AG04450 (cell line): ENCODE measurements at regions of chr11 and their contacts with region 1.

Region 1: DNA sequence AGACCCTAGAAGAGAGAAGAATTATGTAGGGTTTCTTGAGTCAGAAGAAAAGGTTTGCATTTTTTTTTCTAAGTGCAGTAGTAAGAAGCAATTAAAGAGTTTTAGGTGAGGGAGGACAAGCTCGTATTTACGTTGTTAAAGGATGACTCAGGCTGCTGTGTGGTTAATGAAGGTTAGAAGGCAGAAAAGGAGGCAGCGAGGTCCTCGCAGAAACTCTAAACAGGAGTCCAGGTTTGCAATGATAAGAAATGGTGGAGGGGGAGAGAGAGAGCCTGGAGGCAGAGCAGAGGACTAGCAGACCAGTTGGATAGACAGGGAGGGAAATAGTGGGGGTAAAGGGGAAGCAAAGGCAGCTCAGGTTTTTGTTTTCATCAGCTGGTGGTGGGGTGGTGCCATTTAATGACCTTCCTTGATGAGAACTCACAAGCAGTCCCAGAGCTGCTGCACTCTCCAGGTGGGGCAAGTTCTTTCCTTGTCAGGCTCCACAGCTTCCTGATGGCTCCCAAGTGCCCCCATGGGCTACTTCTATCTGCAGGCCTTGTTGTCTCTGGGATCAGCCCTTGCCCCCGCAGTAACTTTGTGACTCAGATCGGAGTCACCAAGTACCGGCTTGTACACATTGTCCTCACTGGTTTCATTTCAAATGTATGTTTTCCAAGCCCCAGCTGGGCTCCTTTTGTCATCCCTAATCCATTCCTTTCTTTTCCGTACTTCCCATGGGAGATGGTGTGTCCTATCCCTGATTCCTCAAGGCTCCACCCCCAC is 8.3 kb upstream of the INSC start:
- DNase-seq: no peak
- H3K4me3 ChIP-seq: no peak overlapping the region
- H3K27ac ChIP-seq: peak overlapping the region; percentile 65
- H3K27me3 ChIP-seq: no peaks in the 10 kb centered on the region
- CTCF ChIP-seq: no peak

Region 2: DNA sequence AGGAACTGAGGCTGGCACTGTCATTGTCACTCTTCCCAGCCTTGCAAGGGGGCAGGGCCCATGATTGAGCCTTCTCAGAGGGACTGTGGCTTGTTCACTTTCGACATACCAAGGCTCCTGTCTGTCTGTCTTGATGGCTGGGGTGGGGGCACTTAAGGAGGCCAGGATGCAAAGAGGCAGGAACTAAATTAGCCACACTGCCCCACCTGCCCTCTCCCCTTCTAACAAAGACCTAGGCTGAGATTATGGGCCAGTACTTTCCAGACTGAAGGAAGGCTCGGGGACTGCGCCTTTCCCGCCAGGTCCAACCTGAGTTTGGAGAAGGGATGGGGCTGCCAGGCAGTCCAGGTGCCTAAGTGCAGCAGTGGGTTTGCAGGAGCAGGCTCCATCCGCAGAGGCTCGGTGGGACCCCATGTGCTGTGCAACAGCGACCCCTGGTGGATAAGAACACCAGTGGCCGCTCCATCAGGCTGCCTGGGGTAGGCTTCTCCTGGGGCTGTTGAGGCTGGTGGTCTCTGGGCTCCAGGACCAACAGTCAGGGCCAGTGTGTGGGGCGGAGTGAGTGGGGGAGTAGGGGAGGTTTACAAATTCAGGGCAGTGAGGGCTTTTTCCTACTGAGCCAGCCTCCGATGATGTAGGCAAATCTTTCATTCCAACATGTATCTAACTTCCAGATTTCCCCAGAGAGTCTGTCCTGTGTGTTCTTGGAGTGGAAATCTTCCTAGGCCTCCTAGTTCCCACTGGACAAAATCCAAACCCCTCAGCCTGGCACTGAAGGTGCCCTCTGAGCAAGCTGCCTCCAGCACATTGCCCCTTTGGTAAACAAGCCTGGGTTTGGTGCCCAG is 102.2 kb after region 1 on chr11:
- CTCF ChIA-PET with region 1: interaction called, 142 read pairs
- POLR2A ChIA-PET with region 1: no interaction called
- DNase-seq: peak; percentile 27
- H3K4me3 ChIP-seq: no peak overlapping the region
- H3K27ac ChIP-seq: no peak overlapping the region
- H3K27me3 ChIP-seq: peaks cover 2% of the 10 kb centered on the region
- CTCF ChIP-seq: peak; percentile 91

Region 3: DNA sequence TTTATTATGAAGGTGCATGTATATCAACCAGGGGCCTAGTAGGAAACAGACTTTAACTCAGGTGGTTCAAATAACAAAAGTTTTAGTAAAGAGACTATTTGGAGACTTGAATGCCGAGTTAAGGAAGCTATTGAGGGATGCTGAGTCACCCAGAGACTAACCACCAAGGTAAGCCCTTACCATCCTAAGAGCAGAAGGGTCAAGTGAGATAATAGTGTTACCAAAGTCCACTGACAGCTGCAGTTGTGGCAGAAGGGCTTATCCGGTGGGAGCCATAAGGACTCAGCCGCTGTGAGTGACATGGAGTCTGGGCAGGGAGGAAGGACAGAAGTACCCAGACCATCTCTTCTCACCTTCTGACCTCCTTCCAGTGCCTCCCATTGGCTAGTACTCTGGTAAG is 142.4 kb after region 1 on chr11:
- CTCF ChIA-PET with region 1: no interaction called
- POLR2A ChIA-PET with region 1: no interaction called
- DNase-seq: no peak
- H3K4me3 ChIP-seq: no peak overlapping the region
- H3K27ac ChIP-seq: no peak overlapping the region
- H3K27me3 ChIP-seq: no peaks in the 10 kb centered on the region
- CTCF ChIP-seq: no peak

Region 4: DNA sequence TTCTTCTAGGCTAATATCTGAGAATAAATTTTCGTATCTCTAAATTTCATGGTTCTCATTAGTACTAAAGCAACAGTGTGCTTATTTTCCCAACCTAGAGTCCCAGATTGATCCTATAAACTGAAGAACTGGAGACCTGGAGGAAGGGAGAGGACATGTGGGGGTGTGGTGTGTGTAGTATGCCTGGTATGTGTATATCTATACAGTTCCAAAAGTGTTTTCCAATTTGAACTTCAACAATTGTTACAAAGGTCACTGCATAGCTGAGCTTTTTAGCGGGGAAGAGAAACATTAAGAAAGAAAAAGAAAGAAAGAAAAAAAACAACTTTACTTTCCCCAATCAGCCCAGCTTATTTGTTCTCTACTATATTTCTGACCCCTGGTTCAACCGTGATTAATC is 1097.9 kb after region 1 on chr11:
- CTCF ChIA-PET with region 1: no interaction called
- POLR2A ChIA-PET with region 1: no interaction called
- DNase-seq: no peak
- H3K4me3 ChIP-seq: no peak overlapping the region
- H3K27ac ChIP-seq: no peak overlapping the region
- H3K27me3 ChIP-seq: no peaks in the 10 kb centered on the region
- CTCF ChIP-seq: no peak